ENCODE measurements at regions of chr4 and their contacts with region 1.

Region 1: GRCh38 chr4:139656614-139657486 is 8.8 kb upstream of the MGST2 start:
- DNase-seq: peak; percentile 57
- ATAC-seq: peak; percentile 88
- H3K4me3 Mint-ChIP-seq: peak overlapping the region; percentile 43
- H3K27ac Mint-ChIP-seq: no peak overlapping the region
- H3K4me1 Mint-ChIP-seq: peaks cover 20% of the 10 kb centered on the region
- H3K27me3 Mint-ChIP-seq: peaks cover 7% of the 10 kb centered on the region
- CTCF ChIP-seq: peak; percentile 59

Region 2: DNA sequence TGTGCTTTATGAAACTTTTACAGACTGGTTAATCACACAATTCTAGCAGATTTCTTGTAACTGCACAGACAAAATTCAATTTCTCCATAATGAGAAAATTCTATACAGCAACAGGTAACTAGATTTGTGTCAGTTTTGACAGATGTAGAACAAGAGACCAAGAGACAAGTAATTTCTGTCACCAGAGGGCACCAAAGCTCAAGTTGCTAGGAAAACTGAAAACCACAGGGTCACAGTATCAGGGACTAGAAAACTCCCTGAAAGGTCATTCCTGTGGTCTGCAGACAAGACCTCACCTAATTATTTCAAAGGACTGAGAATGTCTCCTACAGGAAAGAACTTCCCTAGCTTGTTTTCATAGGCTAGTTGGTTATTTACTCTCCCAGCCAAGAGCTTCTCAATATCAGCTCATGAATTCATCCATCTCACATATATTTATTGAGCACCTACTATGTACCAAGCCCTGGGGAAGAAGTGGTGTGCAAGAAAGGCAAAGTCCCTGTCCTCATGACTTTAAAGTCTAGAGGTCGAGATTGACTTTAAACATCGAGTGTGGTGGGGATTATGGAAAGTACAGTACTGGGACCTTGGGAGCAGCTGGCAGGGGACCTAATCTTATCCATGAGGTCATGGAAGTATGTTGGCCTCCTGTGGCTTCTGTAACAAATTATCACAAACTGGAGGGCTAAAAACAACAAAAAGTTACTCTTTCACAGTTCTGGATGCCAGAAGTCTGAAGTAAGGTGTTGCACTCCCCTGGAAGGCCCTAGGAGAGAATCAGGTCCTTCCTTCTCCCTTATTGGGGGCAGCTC is 53.1 kb before region 1 on chr4:
- CTCF ChIA-PET with region 1: interaction called, 31 read pairs
- POLR2A ChIA-PET with region 1: no interaction called
- DNase-seq: peak; percentile 20
- ATAC-seq: peak; percentile 80
- H3K4me3 Mint-ChIP-seq: no peak overlapping the region
- H3K27ac Mint-ChIP-seq: no peak overlapping the region
- H3K4me1 Mint-ChIP-seq: 0 out of 2 replicates have a peak, but pooled peaks cover 11% of the 10 kb centered on the region
- H3K27me3 Mint-ChIP-seq: peaks cover 18% of the 10 kb centered on the region
- CTCF ChIP-seq: no peak

Region 3: DNA sequence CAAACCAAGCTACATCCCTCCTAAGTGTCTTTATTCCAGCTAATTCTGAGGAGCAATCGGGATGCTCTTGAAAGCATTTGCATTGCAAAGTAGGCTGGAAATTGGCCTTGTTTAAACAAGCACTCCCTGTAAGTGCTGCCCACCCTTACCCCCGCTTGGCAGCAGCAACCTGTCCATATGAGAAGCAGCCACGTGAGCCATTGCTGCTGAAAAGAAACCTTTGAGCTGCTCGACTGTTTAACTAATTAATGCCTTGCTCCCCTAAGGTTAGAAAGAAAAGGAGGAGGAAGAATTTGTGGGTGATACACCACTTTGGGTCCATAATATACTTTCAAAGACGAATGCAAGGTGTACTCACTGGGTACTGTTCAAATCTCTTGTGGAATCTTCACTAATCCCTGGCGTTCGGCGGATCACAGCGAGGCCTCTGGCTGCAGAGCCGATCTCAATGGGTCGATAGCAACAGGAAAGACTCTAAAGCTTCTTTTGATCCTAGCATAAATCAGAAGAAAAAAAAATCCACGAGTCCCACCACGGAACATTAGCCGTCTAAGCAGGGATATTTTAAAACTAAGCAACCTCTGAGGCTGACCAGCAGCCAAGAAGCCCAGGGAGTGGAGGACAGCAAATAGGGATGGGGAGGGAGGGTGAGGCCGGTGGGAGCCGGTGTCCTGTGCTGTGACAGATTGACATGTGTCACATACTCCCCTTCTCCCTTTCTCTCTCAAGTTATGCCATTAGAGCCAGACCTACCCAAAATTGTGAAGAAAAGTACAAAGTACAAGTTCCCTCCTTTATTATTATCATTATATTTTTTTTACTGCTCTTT is 28.5 kb before region 1 on chr4:
- CTCF ChIA-PET with region 1: interaction called, 16 read pairs
- POLR2A ChIA-PET with region 1: no interaction called
- DNase-seq: no peak
- ATAC-seq: peak; percentile 82
- H3K4me3 Mint-ChIP-seq: peak overlapping the region; percentile 55
- H3K27ac Mint-ChIP-seq: no peak overlapping the region
- H3K4me1 Mint-ChIP-seq: peaks cover 45% of the 10 kb centered on the region
- H3K27me3 Mint-ChIP-seq: peaks cover 98% of the 10 kb centered on the region
- CTCF ChIP-seq: no peak

Region 4: GRCh38 chr4:139642364-139642763 is 14.5 kb before region 1 on chr4:
- CTCF ChIA-PET with region 1: interaction called, 31 read pairs
- POLR2A ChIA-PET with region 1: no interaction called
- DNase-seq: no peak
- ATAC-seq: no peak
- H3K4me3 Mint-ChIP-seq: no peak overlapping the region
- H3K27ac Mint-ChIP-seq: no peak overlapping the region
- H3K4me1 Mint-ChIP-seq: no peaks in the 10 kb centered on the region
- H3K27me3 Mint-ChIP-seq: no peaks in the 10 kb centered on the region; the same call in 1 of the 2 replicates
- CTCF ChIP-seq: no peak

Region 5: DNA sequence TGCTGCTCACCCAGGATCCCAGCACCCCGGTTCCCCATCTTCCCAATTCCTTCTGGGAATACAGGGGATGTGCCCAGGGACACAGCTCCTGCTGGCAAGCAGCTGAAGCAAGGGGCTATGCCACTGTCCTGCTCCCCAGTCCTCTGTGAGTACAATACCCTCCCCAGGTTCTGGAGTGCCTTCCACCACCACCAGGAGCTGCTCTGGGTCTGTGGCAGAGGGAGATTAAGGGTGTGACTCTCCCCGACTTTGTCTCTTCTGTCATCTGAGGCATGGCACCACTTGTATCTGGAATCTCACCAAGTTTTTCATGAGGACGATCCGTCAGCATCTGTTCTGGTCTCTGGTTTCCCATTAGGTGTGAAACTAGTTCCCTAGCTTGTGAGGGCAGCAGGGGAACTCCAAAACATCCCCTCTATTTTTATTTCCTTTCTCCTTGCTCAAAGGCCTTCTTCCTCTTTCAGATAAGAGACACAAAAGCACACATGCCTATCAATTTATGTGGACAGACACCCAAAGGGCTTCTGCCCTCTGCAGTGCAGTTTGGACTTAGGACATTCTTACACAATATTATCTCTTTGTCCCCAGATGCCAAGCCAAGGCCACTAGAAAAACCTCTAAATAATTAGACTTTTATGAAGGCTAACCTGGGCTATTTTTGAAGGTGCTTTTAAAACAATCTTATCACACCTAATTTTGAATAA is 35.6 kb after region 1 on chr4:
- CTCF ChIA-PET with region 1: interaction called, 10 read pairs
- POLR2A ChIA-PET with region 1: no interaction called
- DNase-seq: peak; percentile 26
- ATAC-seq: peak; percentile 86
- H3K4me3 Mint-ChIP-seq: no peak overlapping the region
- H3K27ac Mint-ChIP-seq: no peak overlapping the region
- H3K4me1 Mint-ChIP-seq: no peaks in the 10 kb centered on the region
- H3K27me3 Mint-ChIP-seq: no peaks in the 10 kb centered on the region
- CTCF ChIP-seq: no peak

Region 6: GRCh38 chr4:139740531-139741041 is 83.7 kb after region 1 on chr4:
- CTCF ChIA-PET with region 1: interaction called, 11 read pairs
- POLR2A ChIA-PET with region 1: no interaction called
- DNase-seq: no peak
- ATAC-seq: peak; percentile 23
- H3K4me3 Mint-ChIP-seq: no peak overlapping the region
- H3K27ac Mint-ChIP-seq: no peak overlapping the region
- H3K4me1 Mint-ChIP-seq: peaks cover 28% of the 10 kb centered on the region
- H3K27me3 Mint-ChIP-seq: peaks cover 21% of the 10 kb centered on the region
- CTCF ChIP-seq: no peak